Activated naive CD4-positive, alpha-beta T cell treated with anti-CD3 and anti-CD28 coated beads, Interleukin-2, amount 10 ng/mL, durations not matched to agents 7 days and 5 days (primary cell): ENCODE measurements at regions of chr12 and their contacts with region 1.

Region 1: GRCh38 chr12:75814851-75815754 is 216.5 kb downstream of the PHLDA1 start:
- DNase-seq: no peak
- H3K4me3 Mint-ChIP-seq: no peak overlapping the region
- H3K27ac Mint-ChIP-seq: no peak overlapping the region
- H3K4me1 Mint-ChIP-seq: no peaks in the 10 kb centered on the region
- H3K27me3 Mint-ChIP-seq: peaks cover 5% of the 10 kb centered on the region

Region 2: DNA sequence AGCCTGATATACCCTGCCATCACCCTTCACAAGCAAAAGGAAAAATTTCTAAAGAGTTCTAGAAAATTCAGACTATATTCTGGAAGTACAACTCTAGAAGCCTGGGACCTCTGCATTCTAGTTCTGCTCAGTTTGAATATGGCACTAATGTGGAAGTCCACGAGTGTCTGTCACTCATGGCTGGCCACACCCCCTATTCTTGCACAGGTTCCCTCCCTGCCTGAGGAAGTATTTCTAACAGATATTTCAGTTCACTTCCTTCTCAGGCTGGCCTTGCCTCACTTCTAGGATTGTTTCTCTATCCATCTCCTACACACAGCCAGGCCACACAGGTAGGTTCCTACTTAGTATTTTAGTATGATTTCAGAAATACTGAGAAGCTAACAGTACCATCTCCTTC is 149.0 kb after region 1 on chr12:
- CTCF ChIA-PET with region 1: no interaction called
- DNase-seq: no peak
- H3K4me3 Mint-ChIP-seq: no peak overlapping the region
- H3K27ac Mint-ChIP-seq: no peak overlapping the region
- H3K4me1 Mint-ChIP-seq: peaks cover 20% of the 10 kb centered on the region
- H3K27me3 Mint-ChIP-seq: peaks cover 11% of the 10 kb centered on the region

Region 3: DNA sequence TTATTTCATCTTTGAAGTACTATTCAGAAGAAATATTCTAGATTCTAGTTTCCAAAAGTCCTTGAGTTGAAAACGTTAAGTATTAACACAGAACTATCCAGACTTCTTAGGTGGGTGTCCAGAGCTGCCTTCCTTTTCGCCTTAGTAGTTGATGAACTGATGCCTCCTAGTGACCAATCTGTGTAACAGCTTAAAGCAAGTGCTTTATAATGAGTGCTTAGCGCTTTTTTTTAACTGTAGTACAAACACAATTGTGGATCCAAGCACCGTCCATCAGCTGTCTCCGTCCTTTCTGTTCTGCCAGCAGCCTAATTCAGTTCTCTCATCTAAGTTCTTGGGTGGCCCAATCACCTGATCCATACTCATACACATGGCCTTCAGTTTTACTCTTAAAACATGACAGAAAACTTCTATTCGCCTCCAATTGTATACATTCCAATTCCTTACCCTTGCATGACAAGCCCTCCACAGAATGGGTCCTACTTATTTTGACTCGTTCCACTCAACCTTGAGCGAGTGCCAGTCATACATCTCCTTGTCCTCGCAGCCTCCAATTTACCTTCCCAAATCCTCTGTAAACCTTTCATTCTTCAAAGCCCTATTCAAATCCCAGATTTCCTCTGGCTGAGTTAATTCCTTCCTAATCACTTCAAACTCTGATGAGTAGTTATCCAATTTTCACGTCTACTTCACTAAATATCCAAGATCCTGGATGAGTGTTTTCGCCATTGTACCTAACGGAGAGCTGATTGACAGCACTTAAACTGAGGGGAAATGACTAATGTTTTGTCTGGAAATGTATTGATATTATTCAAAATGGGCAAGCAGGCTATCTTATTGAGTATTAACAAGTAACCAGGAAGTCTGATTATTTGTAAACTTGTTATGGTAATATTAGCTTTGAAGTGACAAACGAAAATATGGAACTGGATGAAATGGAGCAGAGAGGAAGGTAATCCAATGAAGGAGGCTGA is 222.3 kb after region 1 on chr12:
- CTCF ChIA-PET with region 1: interaction called, 32 read pairs
- DNase-seq: peak; percentile 24
- H3K4me3 Mint-ChIP-seq: no peak overlapping the region
- H3K27ac Mint-ChIP-seq: no peak overlapping the region
- H3K4me1 Mint-ChIP-seq: peaks cover 10% of the 10 kb centered on the region
- H3K27me3 Mint-ChIP-seq: peaks cover 5% of the 10 kb centered on the region